HepG2 (cell line): ENCODE measurements at regions of chr12 and their contacts with region 1.

Region 1: GRCh38 chr12:12398026-12398859 is 41.4 kb downstream of the BORCS5 start:
- DNase-seq: peak; percentile 89
- ATAC-seq: peak; percentile 84
- H3K4me3 ChIP-seq: no peak overlapping the region
- H3K27ac ChIP-seq: peak overlapping the region; percentile 19
- H3K4me1 ChIP-seq: peaks cover 82% of the 10 kb centered on the region
- H3K27me3 ChIP-seq: no peaks in the 10 kb centered on the region
- CTCF ChIP-seq: no peak
- EP300 ChIP-seq: peak in 1 of 2 experiments; percentile 89; a peak in 2 of 4 replicates
- POLR2A ChIP-seq: no peak
- RAD21 ChIP-seq: no peak

Region 2: GRCh38 chr12:12384571-12385340 is 13.5 kb before region 1 on chr12:
- CTCF ChIA-PET with region 1: no interaction called
- POLR2A ChIA-PET with region 1: interaction called, 28 read pairs
- in situ Hi-C with region 1: no loop called
- intact Hi-C with region 1: no loop called
- DNase-seq: peak; percentile 88
- ATAC-seq: peak; percentile 94
- H3K4me3 ChIP-seq: peak overlapping the region in 2 of 3 experiments; percentile 20 to 24; a peak in 2 of 6 replicates
- H3K27ac ChIP-seq: peak overlapping the region; percentile 86
- H3K4me1 ChIP-seq: peaks cover 85% of the 10 kb centered on the region
- H3K27me3 ChIP-seq: no peaks in the 10 kb centered on the region
- CTCF ChIP-seq: no peak
- EP300 ChIP-seq: peak in 1 of 2 experiments; percentile 50; a peak in 2 of 4 replicates
- POLR2A ChIP-seq: peak in 1 of 2 experiments; percentile 25; a peak in 1 of 4 replicates
- RAD21 ChIP-seq: no peak

Region 3: DNA sequence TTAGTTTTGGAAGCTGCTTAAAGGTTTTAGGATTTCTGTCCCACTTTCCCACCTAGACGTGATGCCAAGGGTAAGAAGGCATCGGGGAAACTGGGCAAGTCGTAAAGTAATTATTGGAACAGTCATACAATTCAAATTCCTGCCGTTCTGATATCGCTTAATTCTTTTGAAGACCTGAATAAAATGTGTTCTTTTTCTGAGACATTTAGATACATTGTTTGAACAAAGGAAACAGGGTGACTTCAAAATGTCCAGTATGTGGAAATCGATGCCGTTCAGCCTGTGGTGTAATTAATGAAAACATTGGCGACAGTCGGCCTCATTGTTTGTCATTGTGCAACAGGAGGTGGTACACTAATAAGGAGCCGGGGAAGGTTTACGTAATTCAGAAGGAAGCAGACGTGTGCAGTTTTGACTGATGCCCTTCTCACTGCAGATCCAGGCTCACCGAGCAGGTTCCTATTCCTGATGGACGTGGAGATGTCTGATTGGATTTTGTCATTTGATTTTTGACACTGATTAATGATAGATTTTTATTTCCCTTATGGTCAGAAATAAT is 51.3 kb after region 1 on chr12:
- CTCF ChIA-PET with region 1: no interaction called
- POLR2A ChIA-PET with region 1: interaction called, 8 read pairs
- in situ Hi-C with region 1: no loop called
- intact Hi-C with region 1: loop called (anchors 2 kb)
- DNase-seq: peak; percentile 98
- ATAC-seq: peak; percentile 85
- H3K4me3 ChIP-seq: peak overlapping the region in 1 of 3 experiments; percentile 26; a peak in 1 of 6 replicates
- H3K27ac ChIP-seq: peak overlapping the region; percentile 75
- H3K4me1 ChIP-seq: peaks cover 67% of the 10 kb centered on the region
- H3K27me3 ChIP-seq: no peaks in the 10 kb centered on the region
- CTCF ChIP-seq: no peak
- EP300 ChIP-seq: peak; percentile 94 to 99
- POLR2A ChIP-seq: no peak
- RAD21 ChIP-seq: no peak